ENCODE measurements at regions of chr3 and their contacts with region 1.

Region 1: GRCh38 chr3:129824926-129825541 is 68.5 kb downstream of the TMCC1 start:
- DNase-seq: peak in 4 of 10 donors; percentile 15 to 59 (median 44)

Region 2: GRCh38 chr3:129490242-129491045 is 334.6 kb before region 1 on chr3:
- intact Hi-C with region 1: loop called (anchors 2 kb)
- DNase-seq: peak; percentile 74 to 98 (median 86)

Region 3: GRCh38 chr3:129650256-129650872 is 174.7 kb before region 1 on chr3:
- intact Hi-C with region 1: loop called (anchors 1 kb)
- DNase-seq: peak in 8 of 10 donors; percentile 43 to 94 (median 73)

Region 4: GRCh38 chr3:129756871-129757270 is 68.2 kb before region 1 on chr3:
- intact Hi-C with region 1: no loop called
- DNase-seq: no peak

Region 5: DNA sequence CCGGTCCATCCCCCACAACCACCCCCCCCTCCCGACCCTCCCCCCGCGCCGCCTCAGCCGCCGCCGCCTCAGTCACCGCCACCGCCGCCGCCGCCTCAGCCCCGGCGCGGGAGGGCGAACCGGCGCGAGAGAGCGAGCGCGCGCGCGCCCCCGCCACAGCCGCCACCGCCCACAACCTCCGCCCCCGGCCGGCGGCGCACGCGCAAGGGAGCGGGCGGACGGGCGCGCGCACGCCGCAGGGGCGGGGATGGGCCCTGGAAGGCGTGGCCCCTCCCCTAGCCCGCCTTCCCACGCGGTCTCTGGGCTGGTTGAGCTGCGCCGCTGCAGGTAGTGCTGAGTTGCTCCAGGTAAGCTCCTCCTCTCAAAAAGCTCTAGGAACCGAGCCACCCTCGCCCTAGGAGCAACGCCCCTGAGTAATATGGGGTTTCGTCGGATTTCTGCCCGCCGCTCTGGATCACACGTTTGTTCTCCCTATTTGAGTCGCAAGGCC is 68.6 kb after region 1 on chr3 and contains the start of gene TMCC1:
- intact Hi-C with region 1: loop called (anchors 10 kb)
- DNase-seq: peak; percentile 61 to 97 (median 84)

Region 6: DNA sequence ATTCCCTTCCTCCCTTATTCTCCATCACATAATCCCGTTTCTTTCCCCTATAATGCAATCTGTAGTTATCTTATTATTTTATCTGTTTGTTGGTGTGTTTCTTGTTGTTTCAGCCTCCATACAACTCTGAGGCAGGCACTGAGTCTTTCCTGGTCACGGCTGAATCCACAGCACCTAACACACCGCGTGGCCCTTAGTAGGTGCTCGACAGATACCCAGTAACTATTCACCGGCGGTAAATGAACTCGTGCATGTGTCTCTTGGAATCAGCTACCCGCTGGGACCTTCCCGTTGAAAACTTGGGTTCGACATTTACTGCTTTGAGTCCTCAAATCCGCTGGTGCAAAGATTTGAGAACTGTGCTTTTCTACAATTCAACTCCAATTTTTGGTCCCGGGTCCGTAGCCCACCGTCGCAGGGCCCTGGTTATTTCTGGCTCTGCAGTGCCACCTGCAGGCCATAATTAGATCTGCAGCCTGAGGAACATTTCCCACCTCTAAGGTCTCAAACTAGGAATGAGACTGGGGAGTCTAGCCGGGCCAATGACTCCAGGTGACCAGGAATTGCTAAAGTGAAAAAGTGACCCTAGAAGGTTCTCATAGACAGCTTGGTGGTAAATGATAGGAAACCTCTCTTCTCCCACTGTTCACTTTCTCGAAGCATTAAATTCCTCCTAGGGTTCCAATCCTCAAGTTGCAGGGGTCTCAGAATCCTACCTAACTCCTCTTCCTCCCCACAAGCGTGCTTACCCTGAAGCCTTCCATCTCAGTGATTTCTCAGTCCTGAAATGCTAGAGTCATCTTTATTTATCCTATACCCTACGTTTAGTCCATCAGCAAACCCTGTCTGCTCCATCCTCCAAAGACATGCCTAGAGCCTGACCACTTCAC is 109.4 kb after region 1 on chr3:
- intact Hi-C with region 1: loop called (anchors 1 kb)
- DNase-seq: peak in 6 of 10 donors; percentile 16 to 78 (median 40)

Measured in posterior cingulate gyrus (tissue), 11 donors.